ENCODE measurements at regions of chr9 and their contacts with region 1.

Region 1: GRCh38 chr9:122464633-122465567 is 12.8 kb downstream of the OR1J1 start:
- DNase-seq: peak; percentile 39 to 79
- ATAC-seq: peak; percentile 77 to 89 (median 89)
- H3K4me3 ChIP-seq: peak overlapping the region; percentile 60
- H3K4me3 Mint-ChIP-seq: peak overlapping the region; percentile 91
- H3K27ac ChIP-seq: peak overlapping the region; percentile 59
- H3K27ac Mint-ChIP-seq: peak overlapping the region; percentile 88 to 92
- H3K4me1 ChIP-seq: peaks cover 10% of the 10 kb centered on the region
- H3K4me1 Mint-ChIP-seq: peaks cover 7% of the 10 kb centered on the region in 2 donors
- H3K27me3 ChIP-seq: peaks cover 3% of the 10 kb centered on the region
- H3K27me3 Mint-ChIP-seq: peaks cover 27 to 65% of the 10 kb centered on the region in 2 donors
- CTCF ChIP-seq: peak; percentile 94

Region 2: GRCh38 chr9:122991370-122991830 is 526.5 kb after region 1 on chr9:
- intact Hi-C with region 1: loop called (anchors 1 kb)
- DNase-seq: peak in 1 of 2 donors; percentile 68
- ATAC-seq: peak; percentile 69 to 85 (median 73)
- H3K4me3 ChIP-seq: no peak overlapping the region
- H3K4me3 Mint-ChIP-seq: no peak overlapping the region
- H3K27ac ChIP-seq: no peak overlapping the region
- H3K27ac Mint-ChIP-seq: no peak overlapping the region
- H3K4me1 ChIP-seq: no peaks in the 10 kb centered on the region
- H3K4me1 Mint-ChIP-seq: peaks cover 6% of the 10 kb centered on the region in 2 donors
- H3K27me3 ChIP-seq: no peaks in the 10 kb centered on the region
- H3K27me3 Mint-ChIP-seq: no peaks in the 10 kb centered on the region
- CTCF ChIP-seq: peak; percentile 72